ENCODE measurements at regions of chr3 and their contacts with region 1.

Region 1: DNA sequence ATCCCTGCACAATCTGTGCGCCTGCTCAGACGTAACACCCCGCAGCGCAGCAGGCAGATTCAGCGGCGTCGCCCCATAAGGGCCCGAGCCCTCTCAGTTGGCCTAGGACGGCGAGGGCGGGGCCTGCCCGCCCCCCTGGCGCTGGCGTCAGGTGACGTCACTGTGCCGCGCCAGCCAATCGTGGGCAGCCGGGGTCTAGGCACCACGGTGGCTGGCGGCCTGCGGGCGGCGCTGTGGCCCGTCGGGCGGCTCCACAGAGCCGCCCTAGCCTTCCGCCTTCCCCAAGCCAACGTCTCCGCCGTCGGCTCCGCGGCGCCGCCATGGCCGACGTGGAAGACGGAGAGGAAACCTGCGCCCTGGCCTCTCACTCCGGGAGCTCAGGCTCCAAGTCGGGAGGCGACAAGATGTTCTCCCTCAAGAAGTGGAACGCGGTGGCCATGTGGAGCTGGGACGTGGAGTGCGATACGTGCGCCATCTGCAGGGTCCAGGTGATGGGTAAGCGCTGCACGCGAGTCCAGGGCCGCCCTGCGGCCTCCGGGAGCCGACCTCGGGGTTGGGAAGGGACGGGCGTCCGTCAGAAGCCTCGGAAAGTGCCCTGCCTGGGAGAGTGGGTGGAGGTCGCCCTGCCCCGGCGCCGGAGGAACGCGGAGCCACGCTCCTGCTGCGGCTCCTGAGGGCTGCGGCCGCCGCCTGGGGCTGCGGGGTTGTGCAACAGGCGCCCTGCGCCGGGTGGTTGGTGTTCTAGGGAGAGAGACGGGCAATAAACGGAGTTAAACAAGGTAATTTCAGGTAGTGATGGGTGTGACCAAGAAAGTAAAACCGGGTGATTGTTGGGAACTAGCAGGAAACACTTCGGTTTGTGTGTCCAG is at the start of gene RNF7:
- DNase-seq: peak; percentile 95 to 99 (median 96)
- ATAC-seq: peak; percentile 97 to 99 (median 98)
- H3K4me3 ChIP-seq: peak within 1 kb of the TSS; percentile 63 to 99 (median 94)
- H3K27ac ChIP-seq: peak within 1 kb of the TSS; percentile 80 to 97 (median 95)
- H3K4me1 ChIP-seq: peaks cover 0 to 44% (median 31%) of the 10 kb centered on the region in 12 donors
- H3K27me3 ChIP-seq: no peaks in the 10 kb centered on the region
- CTCF ChIP-seq: peak; percentile 87 to 99 (median 96)
- POLR2A ChIP-seq: peak in 1 of 2 donors; percentile 83
- total RNA-seq, gene RNF7: 73.0 to 95.3 (median 79.4) TPM

Region 2: GRCh38 chr3:141575879-141576743 is 162.1 kb before region 1 on chr3:
- intact Hi-C with region 1: loop called in 5 of 10 experiments (anchors 2 to 10 kb)
- DNase-seq: no peak
- ATAC-seq: peak in 2 of 4 donors; percentile 65 to 71
- H3K4me3 ChIP-seq: no peak overlapping the region
- H3K27ac ChIP-seq: peak overlapping the region in 1 of 12 donors; percentile 63
- H3K4me1 ChIP-seq: peaks cover 0 to 9% (median 0%) of the 10 kb centered on the region in 12 donors
- H3K27me3 ChIP-seq: no peaks in the 10 kb centered on the region
- CTCF ChIP-seq: peak; percentile 31 to 71 (median 56)
- POLR2A ChIP-seq: no peak

Region 3: GRCh38 chr3:141644931-141645330 is 93.3 kb before region 1 on chr3:
- intact Hi-C with region 1: loop called in 3 of 10 experiments (anchors 5 to 10 kb)
- DNase-seq: peak; percentile 71 to 91 (median 73)
- ATAC-seq: peak; percentile 61 to 86 (median 83)
- H3K4me3 ChIP-seq: no peak overlapping the region
- H3K27ac ChIP-seq: no peak overlapping the region
- H3K4me1 ChIP-seq: peaks cover 0 to 6% (median 0%) of the 10 kb centered on the region in 12 donors
- H3K27me3 ChIP-seq: no peaks in the 10 kb centered on the region
- CTCF ChIP-seq: peak; percentile 41 to 73 (median 63)
- POLR2A ChIP-seq: no peak

Region 4: GRCh38 chr3:141686466-141687291 is 51.6 kb before region 1 on chr3:
- intact Hi-C with region 1: loop called in 1 of 10 experiments (anchors 2 kb)
- DNase-seq: peak; percentile 73 to 82 (median 80)
- ATAC-seq: peak; percentile 94 to 98 (median 96)
- H3K4me3 ChIP-seq: peak overlapping the region in 11 of 12 donors; percentile 9 to 56 (median 41)
- H3K27ac ChIP-seq: peak overlapping the region in 11 of 12 donors; percentile 33 to 85 (median 64)
- H3K4me1 ChIP-seq: peaks cover 0 to 35% (median 7%) of the 10 kb centered on the region in 12 donors
- H3K27me3 ChIP-seq: no peaks in the 10 kb centered on the region
- CTCF ChIP-seq: no peak
- POLR2A ChIP-seq: no peak

Region 5: DNA sequence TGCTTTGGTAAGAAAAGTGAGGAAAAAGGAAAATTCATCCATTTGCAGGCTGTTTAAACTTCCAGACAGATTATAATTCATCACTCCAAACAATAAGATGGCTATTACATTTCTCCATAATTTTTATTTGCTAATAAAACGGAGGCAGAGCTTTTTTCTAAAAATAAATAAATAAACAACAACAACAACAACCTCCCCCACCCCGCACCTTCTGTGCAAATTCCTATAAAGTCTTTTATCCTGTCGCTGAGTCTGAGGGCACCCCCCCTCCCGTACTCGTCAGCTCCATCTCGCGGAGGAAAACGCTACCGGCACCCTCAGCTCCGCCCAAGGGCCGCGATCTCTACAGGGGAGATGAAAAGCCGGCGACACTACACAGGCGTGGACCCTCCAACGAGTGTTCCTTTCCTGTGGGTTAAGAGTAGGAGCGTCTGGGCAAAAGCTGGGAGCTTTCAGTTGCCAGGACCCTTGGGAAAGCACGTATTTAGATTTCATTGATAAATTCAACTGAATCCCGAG is 137.2 kb after region 1 on chr3:
- intact Hi-C with region 1: loop called (anchors 1 to 5 kb)
- DNase-seq: peak; percentile 87 to 90 (median 87)
- ATAC-seq: peak; percentile 88 to 96 (median 90)
- H3K4me3 ChIP-seq: peak overlapping the region; percentile 52 to 99 (median 90)
- H3K27ac ChIP-seq: peak overlapping the region; percentile 94 to 100 (median 99)
- H3K4me1 ChIP-seq: peaks cover 6 to 38% (median 19%) of the 10 kb centered on the region in 12 donors
- H3K27me3 ChIP-seq: no peaks in the 10 kb centered on the region
- CTCF ChIP-seq: peak; percentile 77 to 96 (median 88)
- POLR2A ChIP-seq: no peak

Region 6: DNA sequence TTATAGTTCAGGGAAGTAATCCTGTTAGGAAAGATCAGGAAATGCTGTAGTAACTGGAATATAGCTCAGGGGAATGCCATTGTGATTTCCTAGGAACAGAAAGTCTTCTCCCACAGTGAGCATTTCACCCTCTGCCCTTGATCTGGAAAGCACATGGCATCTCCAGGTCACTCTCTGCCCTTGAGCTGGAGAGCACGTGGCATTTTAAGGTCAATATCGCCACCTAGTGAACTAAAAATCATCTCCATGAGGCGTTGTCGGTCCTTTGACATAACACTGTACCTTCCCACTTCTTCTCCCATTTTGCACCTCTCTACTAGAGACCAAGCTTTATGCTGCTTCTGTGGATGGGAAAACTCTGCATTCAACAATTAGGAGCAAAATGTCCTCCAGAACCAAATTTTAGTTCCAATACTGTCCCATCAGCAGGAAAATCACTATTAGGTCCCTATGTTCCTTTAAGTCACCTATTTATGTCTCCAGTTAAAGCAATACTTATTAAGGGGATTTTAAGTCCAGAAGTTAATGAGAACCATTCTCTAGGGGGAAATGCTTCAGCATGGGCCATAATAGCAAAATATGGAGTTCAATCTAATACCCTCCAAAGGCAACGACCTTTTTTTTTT is 541.8 kb after region 1 on chr3:
- intact Hi-C with region 1: loop called in 1 of 10 experiments (anchors 10 kb)
- DNase-seq: peak in 4 of 5 donors; percentile 32 to 54 (median 35)
- ATAC-seq: peak; percentile 84 to 92 (median 88)
- H3K4me3 ChIP-seq: no peak overlapping the region
- H3K27ac ChIP-seq: no peak overlapping the region
- H3K4me1 ChIP-seq: peaks cover 0 to 33% (median 0%) of the 10 kb centered on the region in 12 donors
- H3K27me3 ChIP-seq: no peaks in the 10 kb centered on the region
- CTCF ChIP-seq: peak; percentile 45 to 74 (median 66)
- POLR2A ChIP-seq: no peak